GM12878 (cell line): ENCODE measurements at regions of chr12 and their contacts with region 1.

Region 1: DNA sequence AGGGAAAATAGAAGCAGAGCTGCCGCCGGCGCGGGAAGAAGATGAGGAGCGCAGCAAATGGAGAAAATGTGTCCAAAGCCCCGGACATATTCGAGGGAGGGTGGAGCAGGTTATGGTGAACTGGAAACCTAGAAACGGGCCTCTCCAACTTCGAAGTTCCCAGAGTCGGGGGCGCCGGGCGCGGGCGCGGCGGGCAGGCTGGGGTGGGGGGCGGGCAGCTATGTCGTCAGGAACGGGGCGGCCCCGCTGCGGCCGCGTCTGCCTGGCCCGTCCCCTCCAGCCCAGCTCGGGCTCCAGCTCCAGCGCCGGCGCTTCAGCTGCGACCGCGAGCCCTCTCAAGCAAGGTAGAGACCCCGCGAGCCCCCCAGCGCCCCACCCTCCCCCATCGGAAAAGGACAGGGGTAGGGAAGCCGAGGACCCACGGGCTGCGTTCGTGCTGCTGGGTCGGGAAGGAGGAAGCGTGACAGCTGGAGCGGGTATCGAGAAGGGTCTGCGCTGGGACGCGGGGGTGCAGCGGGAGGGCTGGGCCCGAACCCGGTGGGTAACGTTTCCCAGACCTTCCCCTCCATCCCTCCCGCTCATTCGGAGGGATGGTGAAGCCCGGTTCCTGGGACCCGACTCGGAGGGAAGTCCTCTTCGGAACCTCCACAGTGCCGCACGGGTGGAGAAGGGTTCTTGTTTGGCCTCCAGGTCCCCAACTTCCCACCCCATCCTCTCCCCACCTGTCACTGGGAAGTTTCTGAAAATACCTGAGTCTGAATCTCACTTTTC is 1.0 kb downstream of the DGKA start:
- DNase-seq: no peak
- ATAC-seq: peak; percentile 28
- H3K4me3 ChIP-seq: peak overlapping the region; percentile 99
- H3K27ac ChIP-seq: peak overlapping the region; percentile 83
- H3K4me1 ChIP-seq: peaks cover 8% of the 10 kb centered on the region; the same call in 1 of the 2 replicates
- H3K27me3 ChIP-seq: no peaks in the 10 kb centered on the region
- CTCF ChIP-seq: no peak
- EP300 ChIP-seq: no peak
- POLR2A ChIP-seq: peak; percentile 45
- RAD21 ChIP-seq: no peak

Region 2: DNA sequence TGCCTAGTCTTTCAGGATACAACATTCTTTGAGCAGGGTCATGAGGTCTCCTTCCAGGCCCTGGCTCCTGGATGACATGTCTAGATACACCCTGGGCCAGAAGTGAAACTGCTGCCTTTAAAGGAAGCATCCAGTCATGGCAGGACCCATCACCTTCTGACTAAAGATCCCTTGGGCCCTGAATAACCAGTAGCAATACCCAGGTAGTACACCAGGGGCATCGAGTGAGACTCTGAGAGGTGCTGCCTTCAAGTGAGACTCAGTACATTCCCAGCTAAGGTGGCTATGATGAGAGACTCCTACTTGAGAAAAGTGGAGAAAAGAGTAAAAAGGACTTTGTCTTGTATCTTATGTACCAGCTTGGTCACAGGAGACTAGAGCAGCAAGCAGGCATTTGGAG is 416.3 kb before region 1 on chr12:
- CTCF ChIA-PET with region 1: no interaction called
- POLR2A ChIA-PET with region 1: no interaction called
- RAD21 ChIA-PET with region 1: no interaction called
- SMC1A ChIA-PET with region 1: no interaction called
- in situ Hi-C with region 1: no loop called
- intact Hi-C with region 1: no loop called
- DNase-seq: no peak
- ATAC-seq: peak; percentile 55; the same call in 1 of the 3 replicates
- H3K4me3 ChIP-seq: no peak overlapping the region
- H3K27ac ChIP-seq: no peak overlapping the region
- H3K4me1 ChIP-seq: no peaks in the 10 kb centered on the region
- H3K27me3 ChIP-seq: no peaks in the 10 kb centered on the region
- CTCF ChIP-seq: peak in 1 of 3 experiments; percentile 32; a peak in 1 of 6 replicates
- EP300 ChIP-seq: no peak
- POLR2A ChIP-seq: no peak
- RAD21 ChIP-seq: no peak

Region 3: DNA sequence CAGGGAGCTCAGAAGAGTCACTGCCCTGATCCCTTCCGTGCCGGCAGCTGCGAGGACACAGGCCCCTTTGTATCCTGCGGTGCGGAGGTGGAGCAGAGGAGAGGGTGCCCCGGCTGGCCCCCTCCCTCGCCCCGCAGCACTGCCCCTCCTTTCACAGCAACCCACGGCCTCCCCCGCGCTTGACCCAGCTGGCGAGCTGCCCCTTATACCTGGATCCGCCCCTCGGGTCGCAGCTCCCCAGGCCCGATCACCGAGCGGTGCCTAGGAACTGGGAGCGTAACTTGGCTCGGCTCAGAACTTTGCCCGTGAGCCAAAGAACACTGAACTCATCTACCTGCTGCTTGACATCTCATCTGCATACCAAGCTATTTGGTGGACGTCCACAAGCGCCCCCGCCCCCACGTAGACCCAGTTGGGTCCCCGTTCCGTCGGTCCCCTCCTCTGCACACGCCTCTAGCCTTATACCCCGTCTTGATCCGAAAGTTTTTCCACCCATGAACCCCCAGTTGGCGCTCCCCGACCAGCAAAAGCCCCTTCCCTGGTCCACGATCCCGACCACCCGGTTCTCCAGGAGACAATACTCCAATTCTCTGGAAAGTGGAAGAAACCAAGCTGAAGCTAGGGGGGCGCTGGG is 101.9 kb before region 1 on chr12:
- CTCF ChIA-PET with region 1: interaction called, 40 read pairs
- POLR2A ChIA-PET with region 1: interaction called, 44 read pairs
- RAD21 ChIA-PET with region 1: interaction called, 26 read pairs
- SMC1A ChIA-PET with region 1: interaction called, 34 read pairs
- in situ Hi-C with region 1: loop called (anchors 5 kb)
- intact Hi-C with region 1: loop called (anchors 1 kb)
- DNase-seq: no peak
- ATAC-seq: peak; percentile 25
- H3K4me3 ChIP-seq: peak overlapping the region; percentile 96
- H3K27ac ChIP-seq: peak overlapping the region; percentile 76
- H3K4me1 ChIP-seq: peaks cover 21% of the 10 kb centered on the region; the same call in 1 of the 2 replicates
- H3K27me3 ChIP-seq: no peaks in the 10 kb centered on the region
- CTCF ChIP-seq: no peak
- EP300 ChIP-seq: no peak
- POLR2A ChIP-seq: 0 out of 2 replicates have a peak, but pooled peaks have one; percentile 20
- RAD21 ChIP-seq: 0 out of 2 replicates have a peak, but pooled peaks have one; percentile 13

Region 4: GRCh38 chr12:55966408-55967281 is 34.7 kb after region 1 on chr12 and contains the start of gene CDK2:
- CTCF ChIA-PET with region 1: interaction called, 16 read pairs
- POLR2A ChIA-PET with region 1: interaction called, 14 read pairs
- RAD21 ChIA-PET with region 1: interaction called, 10 read pairs
- SMC1A ChIA-PET with region 1: interaction called, 4 read pairs
- in situ Hi-C with region 1: no loop called
- intact Hi-C with region 1: no loop called
- DNase-seq: peak; percentile 40
- ATAC-seq: peak; percentile 91
- H3K4me3 ChIP-seq: peak within 1 kb of the TSS; percentile 96
- H3K27ac ChIP-seq: peak within 1 kb of the TSS; percentile 79
- H3K4me1 ChIP-seq: peaks cover 15% of the 10 kb centered on the region
- H3K27me3 ChIP-seq: no peaks in the 10 kb centered on the region
- CTCF ChIP-seq: no peak
- EP300 ChIP-seq: no peak
- POLR2A ChIP-seq: peak; percentile 81
- RAD21 ChIP-seq: no peak
- polyA plus RNA-seq, gene CDK2: 13.1 to 16.1 TPM